ENCODE measurements at regions of chr17 and their contacts with region 1.

Region 1: GRCh38 chr17:57783106-57783742 is 38.1 kb upstream of the CCDC182 start:
- DNase-seq: peak; percentile 66 to 84
- ATAC-seq: peak; percentile 89 to 96
- H3K4me3 ChIP-seq: peak overlapping the region; percentile 20; the same call in 1 of the 3 replicates
- H3K27ac ChIP-seq: peak overlapping the region; percentile 45 to 79; a peak in 4 of 6 replicates
- H3K4me1 ChIP-seq: 0 out of 3 replicates have a peak, but pooled peaks cover 5% of the 10 kb centered on the region
- CTCF ChIP-seq: peak; percentile 95
- EP300 ChIP-seq: no peak
- POLR2A ChIP-seq: no peak
- RAD21 ChIP-seq: peak; percentile 81 to 91

Region 2: GRCh38 chr17:57121338-57122042 is 661.7 kb before region 1 on chr17:
- CTCF ChIA-PET with region 1: interaction called, 42 read pairs
- POLR2A ChIA-PET with region 1: no interaction called
- DNase-seq: peak; percentile 56 to 77
- ATAC-seq: peak; percentile 82 to 89
- H3K4me3 ChIP-seq: no peak overlapping the region
- H3K27ac ChIP-seq: no peak overlapping the region
- H3K4me1 ChIP-seq: 0 out of 3 replicates have a peak, but pooled peaks cover 4% of the 10 kb centered on the region
- CTCF ChIP-seq: peak; percentile 63
- EP300 ChIP-seq: no peak
- POLR2A ChIP-seq: no peak
- RAD21 ChIP-seq: peak; percentile 54 to 57

Region 3: DNA sequence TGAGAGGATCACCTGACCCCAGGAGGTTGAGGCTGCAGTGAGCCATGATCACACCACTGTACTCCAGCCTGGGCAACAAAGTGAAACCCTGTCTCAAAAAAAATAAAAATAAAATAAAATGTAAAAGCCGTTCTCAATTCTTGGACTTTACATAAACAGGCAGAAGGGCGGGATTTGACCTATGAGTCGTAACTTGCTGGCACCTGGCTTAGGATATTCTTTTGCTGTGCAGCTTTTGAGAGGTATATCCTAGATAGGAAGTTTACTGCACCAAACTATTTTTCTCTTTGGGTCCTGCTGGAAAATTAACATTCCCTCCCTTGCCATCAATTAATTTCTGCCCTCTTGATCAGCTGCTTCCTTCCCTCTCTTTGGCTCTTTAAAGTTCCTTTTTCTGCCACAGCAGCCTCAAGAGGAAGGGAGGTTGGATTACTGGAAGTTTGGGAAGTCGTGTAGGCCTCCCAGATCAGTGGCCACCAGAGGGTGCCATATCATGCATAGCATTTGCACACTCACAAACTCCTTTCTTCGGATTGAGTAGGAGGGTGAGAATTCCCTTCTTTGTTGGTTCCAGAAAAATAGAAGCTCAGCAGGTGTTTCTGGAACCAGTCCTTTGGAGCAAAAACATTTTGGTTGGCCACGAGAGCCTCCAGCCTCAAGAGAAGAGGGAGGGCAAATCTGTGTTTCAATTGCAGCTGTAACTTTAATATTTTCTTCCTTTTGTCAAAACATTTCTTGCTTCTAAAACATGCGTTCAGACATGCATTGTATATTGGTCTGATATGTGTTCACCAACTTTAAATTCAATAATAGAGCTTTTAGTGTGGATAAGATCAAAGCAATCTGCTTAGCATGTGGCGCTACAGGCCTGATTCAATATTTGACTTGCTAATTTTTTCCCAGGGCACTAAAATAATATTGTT is 185.4 kb before region 1 on chr17:
- CTCF ChIA-PET with region 1: interaction called, 12 read pairs
- POLR2A ChIA-PET with region 1: no interaction called
- DNase-seq: peak; percentile 82 to 86
- ATAC-seq: peak; percentile 85 to 93
- H3K4me3 ChIP-seq: no peak overlapping the region
- H3K27ac ChIP-seq: peak overlapping the region; percentile 46 to 54; a peak in 5 of 6 replicates
- H3K4me1 ChIP-seq: peaks cover 15% of the 10 kb centered on the region
- CTCF ChIP-seq: peak; percentile 97
- EP300 ChIP-seq: no peak
- POLR2A ChIP-seq: no peak
- RAD21 ChIP-seq: peak; percentile 86 to 87

Region 4: GRCh38 chr17:57747221-57748017 is 35.8 kb before region 1 on chr17:
- CTCF ChIA-PET with region 1: interaction called, 24 read pairs
- POLR2A ChIA-PET with region 1: no interaction called
- DNase-seq: peak; percentile 79 to 84
- ATAC-seq: peak; percentile 80 to 91
- H3K4me3 ChIP-seq: no peak overlapping the region
- H3K27ac ChIP-seq: no peak overlapping the region
- H3K4me1 ChIP-seq: no peaks in the 10 kb centered on the region
- CTCF ChIP-seq: peak; percentile 96
- EP300 ChIP-seq: no peak
- POLR2A ChIP-seq: no peak
- RAD21 ChIP-seq: peak; percentile 93 to 98

Region 5: GRCh38 chr17:57794841-57795240 is 11.6 kb after region 1 on chr17:
- CTCF ChIA-PET with region 1: interaction called, 84 read pairs
- POLR2A ChIA-PET with region 1: no interaction called
- DNase-seq: no peak
- ATAC-seq: no peak
- H3K4me3 ChIP-seq: no peak overlapping the region
- H3K27ac ChIP-seq: no peak overlapping the region
- H3K4me1 ChIP-seq: no peaks in the 10 kb centered on the region
- CTCF ChIP-seq: no peak
- EP300 ChIP-seq: no peak
- POLR2A ChIP-seq: no peak
- RAD21 ChIP-seq: no peak

Region 6: GRCh38 chr17:57823469-57824401 is 40.5 kb after region 1 on chr17:
- CTCF ChIA-PET with region 1: interaction called, 25 read pairs
- POLR2A ChIA-PET with region 1: no interaction called
- DNase-seq: peak in 1 of 2 experiments; percentile 61
- ATAC-seq: peak; percentile 86 to 87
- H3K4me3 ChIP-seq: no peak overlapping the region
- H3K27ac ChIP-seq: peak overlapping the region; percentile 51 to 75
- H3K4me1 ChIP-seq: peaks cover 7% of the 10 kb centered on the region; the same call in 2 of the 3 replicates
- CTCF ChIP-seq: no peak
- EP300 ChIP-seq: peak; percentile 36 to 81; a peak in 3 of 5 replicates
- POLR2A ChIP-seq: no peak
- RAD21 ChIP-seq: no peak

Region 7: GRCh38 chr17:57874434-57875308 is 91.4 kb after region 1 on chr17:
- CTCF ChIA-PET with region 1: no interaction called
- POLR2A ChIA-PET with region 1: no interaction called
- DNase-seq: no peak
- ATAC-seq: no peak
- H3K4me3 ChIP-seq: no peak overlapping the region
- H3K27ac ChIP-seq: peak overlapping the region; percentile 92 to 95
- H3K4me1 ChIP-seq: peaks cover 95% of the 10 kb centered on the region
- CTCF ChIP-seq: no peak
- EP300 ChIP-seq: no peak
- POLR2A ChIP-seq: no peak
- RAD21 ChIP-seq: no peak

Region 8: DNA sequence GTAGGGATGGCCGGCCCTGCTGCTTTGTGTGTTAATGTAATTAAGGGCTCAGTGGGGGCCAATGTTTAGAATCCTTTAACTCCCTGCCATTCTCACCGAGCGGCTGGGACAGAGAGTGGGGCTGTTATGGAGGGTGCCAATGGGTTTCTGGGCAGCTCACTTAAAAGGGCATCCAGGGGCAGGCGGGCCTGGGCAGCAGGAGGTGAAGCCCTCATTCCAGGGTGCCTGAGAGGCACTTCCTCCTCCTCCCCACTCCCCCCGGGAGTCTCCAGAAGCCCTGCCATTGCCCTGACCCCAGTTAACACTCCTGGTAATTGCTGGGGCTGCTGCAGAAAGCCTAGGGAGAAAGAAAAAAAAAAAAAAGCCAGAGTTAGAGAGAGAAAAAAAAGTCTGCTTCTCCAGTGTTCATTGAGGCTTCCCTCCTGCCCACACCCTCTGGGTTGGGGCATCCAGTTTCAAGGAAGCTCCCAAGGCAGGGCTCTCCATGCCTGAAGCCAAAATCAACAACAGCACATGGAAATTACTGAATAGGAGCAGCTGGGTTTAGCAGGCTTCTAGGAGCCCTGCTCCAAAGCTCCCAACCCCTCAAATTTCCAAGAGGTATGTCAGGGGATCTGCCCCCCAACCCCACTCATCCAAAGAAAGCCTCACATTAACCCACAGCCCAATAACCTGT is 144.0 kb after region 1 on chr17:
- CTCF ChIA-PET with region 1: no interaction called
- POLR2A ChIA-PET with region 1: no interaction called
- DNase-seq: no peak
- ATAC-seq: peak; percentile 20 to 63; a peak in 3 of 6 replicates
- H3K4me3 ChIP-seq: no peak overlapping the region
- H3K27ac ChIP-seq: peak overlapping the region; percentile 55 to 75; a peak in 5 of 6 replicates
- H3K4me1 ChIP-seq: peaks cover 79% of the 10 kb centered on the region
- CTCF ChIP-seq: no peak
- EP300 ChIP-seq: no peak
- POLR2A ChIP-seq: no peak
- RAD21 ChIP-seq: no peak

Region 9: GRCh38 chr17:58329035-58329809 is 546.0 kb after region 1 on chr17:
- CTCF ChIA-PET with region 1: no interaction called
- POLR2A ChIA-PET with region 1: no interaction called
- DNase-seq: no peak
- ATAC-seq: peak; percentile 25 to 67; a peak in 4 of 6 replicates
- H3K4me3 ChIP-seq: no peak overlapping the region
- H3K27ac ChIP-seq: 0 out of 6 replicates have a peak overlapping the region, but pooled peaks of 1 of the 2 experiments have one; percentile 4
- H3K4me1 ChIP-seq: peaks cover 9% of the 10 kb centered on the region
- CTCF ChIP-seq: peak; percentile 36
- EP300 ChIP-seq: no peak
- POLR2A ChIP-seq: no peak
- RAD21 ChIP-seq: peak in 1 of 2 experiments; percentile 14; a peak in 1 of 5 replicates

Measured in A549 (cell line).